Activated CD8-positive, alpha-beta T cell treated with anti-CD3 and anti-CD28 coated beads, Interleukin-2, amount 10 ng/mL, durations not matched to agents 7 days and 5 days (primary cell): ENCODE measurements at regions of chr5 and their contacts with region 1.

Region 1: GRCh38 chr5:176543428-176544173 is 5.5 kb upstream of the CDHR2 start:
- DNase-seq: peak; percentile 82
- ATAC-seq: peak; percentile 77
- H3K4me3 Mint-ChIP-seq: peak overlapping the region; percentile 94
- H3K27ac Mint-ChIP-seq: peak overlapping the region; percentile 92
- H3K4me1 Mint-ChIP-seq: peaks cover 67% of the 10 kb centered on the region
- H3K27me3 Mint-ChIP-seq: no peaks in the 10 kb centered on the region

Region 2: DNA sequence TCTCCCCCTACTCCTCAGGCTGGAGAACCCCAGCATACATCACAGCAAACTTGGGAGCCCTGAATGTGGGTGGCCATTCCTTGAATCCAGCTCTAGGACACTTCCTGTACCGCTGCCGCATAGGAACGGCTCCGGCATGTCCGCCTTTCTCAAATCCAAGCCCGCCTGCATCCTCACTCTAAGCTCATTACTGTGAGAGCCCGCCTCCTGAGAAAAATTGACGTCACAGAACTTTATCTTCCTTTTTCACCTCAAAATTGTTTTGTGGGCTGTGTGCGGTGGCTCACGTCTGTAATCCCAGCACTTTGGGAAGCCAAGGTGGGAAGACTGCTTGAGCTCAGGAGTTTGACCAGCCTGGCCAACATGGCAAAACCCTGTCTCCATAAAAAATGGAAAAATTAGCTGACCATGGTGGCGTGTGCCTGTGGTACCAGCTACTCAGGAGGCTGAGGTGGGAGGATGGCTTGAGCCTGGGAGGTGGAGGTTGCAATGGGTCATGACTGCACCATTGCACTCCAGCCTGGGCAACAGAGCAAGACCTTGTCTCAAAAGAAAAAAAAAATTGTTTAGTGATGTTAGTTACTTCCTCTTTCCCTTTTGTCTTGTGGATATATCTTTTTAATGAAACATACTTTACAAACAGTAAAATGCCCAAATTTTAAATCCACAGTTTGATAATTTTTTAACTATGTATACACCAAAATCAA is 29.2 kb before region 1 on chr5:
- CTCF ChIA-PET with region 1: no interaction called
- POLR2A ChIA-PET with region 1: no interaction called
- DNase-seq: no peak
- ATAC-seq: no peak
- H3K4me3 Mint-ChIP-seq: no peak overlapping the region
- H3K27ac Mint-ChIP-seq: no peak overlapping the region
- H3K4me1 Mint-ChIP-seq: peaks cover 22% of the 10 kb centered on the region
- H3K27me3 Mint-ChIP-seq: peaks cover 4% of the 10 kb centered on the region

Region 3: GRCh38 chr5:176530983-176531821 is 12.4 kb before region 1 on chr5:
- CTCF ChIA-PET with region 1: interaction called, 39 read pairs
- POLR2A ChIA-PET with region 1: interaction called, 35 read pairs
- DNase-seq: peak; percentile 50
- ATAC-seq: peak; percentile 13
- H3K4me3 Mint-ChIP-seq: peak overlapping the region; percentile 89
- H3K27ac Mint-ChIP-seq: peak overlapping the region; percentile 96
- H3K4me1 Mint-ChIP-seq: peaks cover 69% of the 10 kb centered on the region
- H3K27me3 Mint-ChIP-seq: no peaks in the 10 kb centered on the region

Region 4: DNA sequence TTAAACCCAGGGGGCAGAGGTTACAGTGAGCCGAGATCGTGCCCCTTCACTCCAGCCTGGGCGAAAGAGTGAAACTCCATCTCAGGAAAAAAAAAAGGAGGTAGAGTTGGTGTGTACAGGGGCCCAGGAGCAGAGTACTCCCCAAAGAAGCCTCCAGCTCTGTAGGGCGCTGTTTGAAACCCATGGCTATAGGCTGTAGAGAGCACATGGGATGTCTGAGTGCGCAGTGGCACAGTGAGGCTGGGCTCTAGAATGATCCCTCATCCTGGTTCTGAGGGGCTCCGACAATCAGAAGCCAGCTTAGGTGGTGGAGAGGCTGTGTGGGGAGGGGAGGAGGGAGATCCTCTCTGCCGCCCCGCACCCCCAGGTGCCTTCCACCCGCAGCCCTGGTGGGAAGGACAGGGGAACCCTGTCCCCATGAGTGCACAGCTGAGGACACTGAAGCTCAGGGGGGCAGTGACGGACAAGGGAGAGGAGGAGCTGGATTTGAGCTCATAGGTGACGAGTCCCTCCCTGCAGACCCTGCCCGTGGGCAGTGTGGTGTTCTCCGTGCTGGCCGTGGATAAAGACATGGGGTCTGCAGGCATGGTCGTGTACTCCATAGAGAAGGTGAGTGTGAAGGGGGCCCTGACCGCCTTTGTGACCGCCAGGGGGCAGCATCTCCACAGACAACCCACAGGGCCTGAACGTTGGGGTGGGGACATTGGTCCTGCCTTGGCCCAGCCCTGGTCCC is 30.1 kb after region 1 on chr5:
- CTCF ChIA-PET with region 1: interaction called, 10 read pairs
- POLR2A ChIA-PET with region 1: interaction called, 5 read pairs
- DNase-seq: peak; percentile 83
- ATAC-seq: peak; percentile 90
- H3K4me3 Mint-ChIP-seq: no peak overlapping the region
- H3K27ac Mint-ChIP-seq: no peak overlapping the region
- H3K4me1 Mint-ChIP-seq: peaks cover 3% of the 10 kb centered on the region
- H3K27me3 Mint-ChIP-seq: peaks cover 3% of the 10 kb centered on the region

Region 5: GRCh38 chr5:176606032-176606431 is 62.4 kb after region 1 on chr5:
- CTCF ChIA-PET with region 1: no interaction called
- POLR2A ChIA-PET with region 1: no interaction called
- DNase-seq: no peak
- ATAC-seq: no peak
- H3K4me3 Mint-ChIP-seq: no peak overlapping the region
- H3K27ac Mint-ChIP-seq: no peak overlapping the region
- H3K4me1 Mint-ChIP-seq: peaks cover 11% of the 10 kb centered on the region
- H3K27me3 Mint-ChIP-seq: peaks cover 21% of the 10 kb centered on the region